ENCODE measurements at regions of chr1 and their contacts with region 1.

Region 1: GRCh38 chr1:205284343-205285144 is 37.0 kb downstream of the NUAK2 start:
- DNase-seq: peak; percentile 82
- ATAC-seq: peak; percentile 48
- H3K4me3 ChIP-seq: peak overlapping the region in 3 of 5 experiments; percentile 13 to 47 (median 29)
- H3K4me3 Mint-ChIP-seq: peak overlapping the region; percentile 74
- H3K27ac ChIP-seq: peak overlapping the region; percentile 94
- H3K27ac Mint-ChIP-seq: peak overlapping the region; percentile 92
- H3K4me1 ChIP-seq: peaks cover 90 to 95% of the 10 kb centered on the region in 2 donors
- H3K4me1 Mint-ChIP-seq: peaks cover 82% of the 10 kb centered on the region
- H3K27me3 ChIP-seq: no peaks in the 10 kb centered on the region
- H3K27me3 Mint-ChIP-seq: no peaks in the 10 kb centered on the region
- CTCF ChIP-seq: no peak

Region 2: DNA sequence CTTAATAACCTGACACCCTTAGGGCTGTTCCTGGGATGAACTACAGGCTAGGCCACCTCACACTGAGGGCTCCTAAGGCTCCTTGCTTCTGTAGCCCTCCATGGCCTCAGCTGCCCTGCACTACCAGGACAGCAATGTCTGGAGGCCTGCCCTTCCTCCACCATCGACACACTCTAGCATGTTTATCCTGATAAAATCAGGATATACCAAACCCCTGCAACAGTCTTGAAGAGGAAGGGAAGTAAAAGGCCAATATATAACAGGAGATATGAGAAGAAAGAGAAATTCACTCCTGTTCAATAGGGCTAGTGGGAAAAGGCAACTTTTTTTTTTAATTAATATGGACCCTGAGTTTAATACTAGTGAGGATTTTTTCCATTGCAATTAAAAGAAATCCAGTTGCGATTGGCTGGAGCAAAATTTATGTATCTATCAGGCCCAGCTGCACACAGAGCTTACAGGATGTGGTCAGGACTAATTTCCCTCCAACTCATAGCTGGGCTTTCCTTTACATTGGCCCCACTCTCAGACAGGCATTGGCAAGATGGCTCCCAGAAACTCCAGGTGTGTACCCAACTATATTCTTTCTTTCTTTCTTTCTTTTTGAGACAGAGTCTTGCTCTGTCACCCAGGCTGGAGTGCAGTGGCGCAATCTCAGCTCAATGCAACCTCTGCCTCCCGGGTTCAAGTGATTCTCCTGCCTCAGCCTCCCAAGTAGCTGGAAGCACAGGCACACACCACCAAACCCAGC is 1671.4 kb before region 1 on chr1:
- CTCF ChIA-PET with region 1: no interaction called
- POLR2A ChIA-PET with region 1: no interaction called
- intact Hi-C with region 1: no loop called
- DNase-seq: no peak
- ATAC-seq: no peak
- H3K4me3 ChIP-seq: no peak overlapping the region
- H3K4me3 Mint-ChIP-seq: no peak overlapping the region
- H3K27ac ChIP-seq: no peak overlapping the region
- H3K27ac Mint-ChIP-seq: no peak overlapping the region
- H3K4me1 ChIP-seq: peaks cover 7 to 10% of the 10 kb centered on the region in 2 donors
- H3K4me1 Mint-ChIP-seq: peaks cover 10% of the 10 kb centered on the region
- H3K27me3 ChIP-seq: no peaks in the 10 kb centered on the region
- H3K27me3 Mint-ChIP-seq: no peaks in the 10 kb centered on the region
- CTCF ChIP-seq: no peak

Region 3: DNA sequence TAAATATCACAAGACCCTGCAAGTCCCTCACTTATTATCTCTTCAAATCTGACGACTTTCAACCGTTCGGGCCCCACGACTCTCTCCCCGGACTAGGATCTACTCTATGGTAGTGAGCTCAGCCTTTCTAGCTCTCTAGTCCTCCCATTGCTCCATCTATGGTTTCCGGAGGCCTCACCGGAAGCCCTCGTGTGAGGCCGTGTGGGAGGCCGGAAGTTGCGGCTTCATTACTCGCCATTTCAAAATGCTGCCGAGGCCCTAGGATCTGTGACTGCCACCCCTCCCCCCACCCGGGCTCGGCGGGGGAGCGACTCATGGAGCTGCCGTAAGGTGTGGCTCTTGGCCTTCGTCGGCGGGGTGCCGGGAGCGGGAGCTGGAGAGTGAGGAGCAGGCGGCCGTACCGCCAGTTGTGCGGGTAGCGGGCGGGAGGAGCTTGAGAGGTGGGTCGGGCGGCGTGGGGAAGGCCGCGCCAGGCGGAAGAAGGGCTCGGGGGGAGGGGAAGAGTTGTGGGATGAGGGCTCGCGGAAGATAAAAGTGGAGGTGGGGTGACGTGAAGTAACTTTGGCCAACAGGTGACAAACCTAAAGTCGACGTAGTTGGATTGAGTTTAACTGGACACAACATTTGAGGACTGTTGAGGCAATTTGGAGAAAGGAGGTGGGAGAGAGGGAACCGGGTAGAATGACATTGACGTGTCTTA is 768.2 kb before region 1 on chr1 and contains the start of gene MDM4:
- CTCF ChIA-PET with region 1: no interaction called
- POLR2A ChIA-PET with region 1: no interaction called
- intact Hi-C with region 1: loop called (anchors 5 kb)
- DNase-seq: peak; percentile 97
- ATAC-seq: peak; percentile 78
- H3K4me3 ChIP-seq: peak within 1 kb of the TSS; percentile 75 to 96 (median 91)
- H3K4me3 Mint-ChIP-seq: no peak within 1 kb of the TSS
- H3K27ac ChIP-seq: peak within 1 kb of the TSS; percentile 95 to 97
- H3K27ac Mint-ChIP-seq: no peak within 1 kb of the TSS
- H3K4me1 ChIP-seq: peaks cover 83 to 92% of the 10 kb centered on the region in 2 donors
- H3K4me1 Mint-ChIP-seq: peaks cover 68% of the 10 kb centered on the region
- H3K27me3 ChIP-seq: no peaks in the 10 kb centered on the region
- H3K27me3 Mint-ChIP-seq: no peaks in the 10 kb centered on the region
- CTCF ChIP-seq: no peak
- total RNA-seq, gene MDM4: 374 and 378 TPM in 2 replicates

Region 4: GRCh38 chr1:205111354-205111753 is 173.2 kb before region 1 on chr1:
- CTCF ChIA-PET with region 1: no interaction called
- POLR2A ChIA-PET with region 1: no interaction called
- intact Hi-C with region 1: no loop called
- DNase-seq: peak; percentile 22
- ATAC-seq: no peak
- H3K4me3 ChIP-seq: no peak overlapping the region
- H3K4me3 Mint-ChIP-seq: no peak overlapping the region
- H3K27ac ChIP-seq: peak overlapping the region in 1 of 2 donors; percentile 31
- H3K27ac Mint-ChIP-seq: peak overlapping the region; percentile 27
- H3K4me1 ChIP-seq: peaks cover 6 to 20% of the 10 kb centered on the region in 2 donors
- H3K4me1 Mint-ChIP-seq: peaks cover 22% of the 10 kb centered on the region
- H3K27me3 ChIP-seq: no peaks in the 10 kb centered on the region
- H3K27me3 Mint-ChIP-seq: no peaks in the 10 kb centered on the region
- CTCF ChIP-seq: no peak

Region 5: DNA sequence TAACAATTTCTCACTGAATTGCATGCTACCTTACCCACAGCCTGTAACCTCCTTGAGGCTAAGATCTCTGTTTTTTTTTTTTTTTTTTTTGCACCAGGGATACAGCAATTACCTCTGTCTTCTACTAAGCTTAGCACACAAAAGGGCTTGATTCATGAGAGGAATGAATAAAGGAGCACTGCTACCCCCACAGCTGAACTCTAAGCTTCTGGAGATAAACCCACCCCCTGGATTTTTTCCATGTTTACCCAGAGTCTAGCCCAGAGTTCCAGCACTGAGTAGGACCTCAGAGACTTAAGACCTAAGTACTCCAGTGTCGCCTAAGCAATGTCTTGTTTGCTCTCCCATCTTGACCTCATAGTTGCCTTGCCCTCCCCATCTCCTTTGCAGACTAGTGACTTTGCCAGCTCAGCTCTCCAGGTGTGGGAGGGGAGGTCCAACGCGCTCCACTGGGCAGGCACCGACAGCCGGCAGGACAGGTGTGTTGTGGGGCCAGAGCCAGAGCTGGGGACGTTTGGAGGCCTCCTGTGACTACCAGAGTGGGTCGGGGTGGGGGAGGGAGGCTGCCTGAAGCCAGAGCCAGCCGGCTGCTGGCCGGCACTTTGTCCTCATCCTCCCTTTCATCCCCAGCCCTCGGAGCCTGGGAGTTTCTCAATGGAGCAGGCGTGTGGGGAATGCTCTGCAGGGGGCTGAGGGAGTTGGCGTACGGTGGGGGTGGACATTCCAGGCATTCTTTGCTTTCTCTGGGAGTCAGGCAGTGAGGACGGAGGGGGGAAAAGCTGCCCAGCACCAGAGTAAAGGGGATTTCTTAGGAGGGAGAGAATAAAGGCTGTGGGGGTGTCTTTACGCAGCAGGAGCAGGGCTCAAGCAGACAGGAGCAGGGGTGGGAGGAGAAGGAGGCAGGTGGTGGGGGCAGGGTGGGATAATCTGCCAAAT is 16.6 kb after region 1 on chr1:
- CTCF ChIA-PET with region 1: interaction called, 210 read pairs
- POLR2A ChIA-PET with region 1: interaction called, 22 read pairs
- intact Hi-C with region 1: loop called (anchors 1 kb)
- DNase-seq: peak; percentile 61
- ATAC-seq: peak; percentile 70
- H3K4me3 ChIP-seq: no peak overlapping the region
- H3K4me3 Mint-ChIP-seq: peak overlapping the region; percentile 55
- H3K27ac ChIP-seq: peak overlapping the region; percentile 28 to 75
- H3K27ac Mint-ChIP-seq: peak overlapping the region; percentile 86
- H3K4me1 ChIP-seq: peaks cover 32 to 53% of the 10 kb centered on the region in 2 donors
- H3K4me1 Mint-ChIP-seq: peaks cover 64% of the 10 kb centered on the region
- H3K27me3 ChIP-seq: no peaks in the 10 kb centered on the region
- H3K27me3 Mint-ChIP-seq: no peaks in the 10 kb centered on the region
- CTCF ChIP-seq: no peak

Region 6: GRCh38 chr1:205321164-205321958 is 36.8 kb after region 1 on chr1 and contains the start of gene NUAK2:
- CTCF ChIA-PET with region 1: interaction called, 2,421 read pairs
- POLR2A ChIA-PET with region 1: interaction called, 372 read pairs
- intact Hi-C with region 1: loop called (anchors 1 kb)
- DNase-seq: peak; percentile 89
- ATAC-seq: peak; percentile 90
- H3K4me3 ChIP-seq: peak within 1 kb of the TSS; percentile 65 to 100 (median 98)
- H3K4me3 Mint-ChIP-seq: peak within 1 kb of the TSS; percentile 97
- H3K27ac ChIP-seq: peak within 1 kb of the TSS; percentile 65 to 98
- H3K27ac Mint-ChIP-seq: peak within 1 kb of the TSS; percentile 95
- H3K4me1 ChIP-seq: peaks cover 52 to 54% of the 10 kb centered on the region in 2 donors
- H3K4me1 Mint-ChIP-seq: peaks cover 62% of the 10 kb centered on the region
- H3K27me3 ChIP-seq: no peaks in the 10 kb centered on the region
- H3K27me3 Mint-ChIP-seq: peaks cover 2% of the 10 kb centered on the region
- CTCF ChIP-seq: peak; percentile 35
- total RNA-seq, gene NUAK2: 102 and 105 TPM in 2 replicates

Region 7: GRCh38 chr1:205840146-205840923 is 555.8 kb after region 1 on chr1:
- CTCF ChIA-PET with region 1: no interaction called
- POLR2A ChIA-PET with region 1: no interaction called
- intact Hi-C with region 1: no loop called
- DNase-seq: no peak
- ATAC-seq: no peak
- H3K4me3 ChIP-seq: no peak overlapping the region
- H3K4me3 Mint-ChIP-seq: no peak overlapping the region
- H3K27ac ChIP-seq: no peak overlapping the region
- H3K27ac Mint-ChIP-seq: no peak overlapping the region
- H3K4me1 ChIP-seq: no peaks in the 10 kb centered on the region
- H3K4me1 Mint-ChIP-seq: no peaks in the 10 kb centered on the region
- H3K27me3 ChIP-seq: no peaks in the 10 kb centered on the region
- H3K27me3 Mint-ChIP-seq: no peaks in the 10 kb centered on the region
- CTCF ChIP-seq: no peak

Region 8: GRCh38 chr1:206050655-206051235 is 766.2 kb after region 1 on chr1:
- CTCF ChIA-PET with region 1: no interaction called
- POLR2A ChIA-PET with region 1: interaction called, 3 read pairs
- intact Hi-C with region 1: loop called (anchors 10 kb)
- DNase-seq: peak; percentile 96
- ATAC-seq: peak; percentile 93
- H3K4me3 ChIP-seq: peak overlapping the region in 1 of 5 experiments; percentile 42
- H3K4me3 Mint-ChIP-seq: peak overlapping the region; percentile 91
- H3K27ac ChIP-seq: peak overlapping the region; percentile 91 to 93
- H3K27ac Mint-ChIP-seq: peak overlapping the region; percentile 99
- H3K4me1 ChIP-seq: peaks cover 71 to 80% of the 10 kb centered on the region in 2 donors
- H3K4me1 Mint-ChIP-seq: peaks cover 89% of the 10 kb centered on the region
- H3K27me3 ChIP-seq: no peaks in the 10 kb centered on the region
- H3K27me3 Mint-ChIP-seq: no peaks in the 10 kb centered on the region
- CTCF ChIP-seq: peak; percentile 57